ENCODE measurements at regions of chr9 and their contacts with region 1.

Region 1: DNA sequence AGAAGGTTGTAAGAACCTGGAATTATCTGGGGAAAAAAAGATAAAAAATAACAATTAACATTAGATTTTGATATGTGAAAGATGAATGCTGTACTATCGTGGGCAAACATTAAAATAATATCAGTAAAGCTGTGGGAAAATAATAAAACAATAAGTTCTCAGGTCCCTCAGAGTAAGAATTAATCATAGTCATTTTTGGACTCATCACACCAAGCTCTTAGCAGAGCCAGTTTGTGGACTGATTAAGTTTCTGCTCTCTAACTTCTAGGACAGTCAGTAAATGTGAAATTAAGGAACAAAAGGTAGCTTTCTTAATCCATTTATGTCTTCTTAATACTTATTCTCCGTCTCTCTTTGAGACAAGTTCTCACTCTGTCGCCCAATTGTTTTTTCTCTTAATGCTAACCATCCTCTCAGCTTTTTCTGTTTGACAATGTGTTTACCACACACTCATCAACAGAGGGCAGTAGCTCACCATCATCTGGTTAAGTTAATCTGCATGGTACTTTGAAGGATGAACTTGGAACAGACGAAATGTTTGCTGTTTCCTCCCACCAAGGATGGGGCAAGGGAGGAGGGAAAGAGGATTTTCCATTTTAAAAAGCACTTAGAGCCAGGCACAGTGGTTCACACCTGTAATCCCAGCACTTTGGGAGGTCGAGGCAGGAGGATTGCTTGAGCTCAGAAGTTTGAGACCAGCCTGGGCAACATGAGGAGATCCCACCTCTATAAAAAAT is 5.3 kb upstream of the ACO1 start:
- DNase-seq: peak; percentile 90
- H3K4me3 Mint-ChIP-seq: no peak overlapping the region
- H3K27ac Mint-ChIP-seq: no peak overlapping the region
- H3K4me1 Mint-ChIP-seq: peaks cover 18% of the 10 kb centered on the region
- H3K27me3 Mint-ChIP-seq: peaks cover 14% of the 10 kb centered on the region
- CTCF ChIP-seq: peak; percentile 59

Region 2: DNA sequence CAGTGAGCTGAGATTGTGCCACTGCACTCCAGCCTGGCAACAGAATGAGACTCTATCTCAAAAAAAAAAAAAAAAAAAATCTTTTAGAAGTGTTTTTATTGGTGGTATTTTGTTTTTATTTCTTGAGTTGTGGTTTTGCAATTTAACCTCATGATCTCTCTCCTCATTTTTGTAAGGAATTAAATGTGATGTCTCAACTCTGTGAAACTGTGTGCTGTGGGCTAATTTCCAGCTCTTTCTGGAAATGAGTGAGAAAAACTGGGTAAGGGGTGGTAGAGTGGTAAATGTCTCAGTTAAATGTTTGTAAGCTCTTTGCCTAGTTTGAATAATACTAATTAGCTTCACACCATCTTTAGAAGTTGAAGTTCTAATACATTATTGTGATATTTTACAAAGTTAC is 34.3 kb after region 1 on chr9:
- CTCF ChIA-PET with region 1: interaction called, 10 read pairs
- POLR2A ChIA-PET with region 1: interaction called, 3 read pairs
- intact Hi-C with region 1: no loop called
- DNase-seq: peak; percentile 44
- H3K4me3 Mint-ChIP-seq: no peak overlapping the region
- H3K27ac Mint-ChIP-seq: peak overlapping the region; percentile 59
- H3K4me1 Mint-ChIP-seq: no peaks in the 10 kb centered on the region
- H3K27me3 Mint-ChIP-seq: no peaks in the 10 kb centered on the region
- CTCF ChIP-seq: no peak

Region 3: GRCh38 chr9:32508728-32509127 is 129.6 kb after region 1 on chr9:
- CTCF ChIA-PET with region 1: interaction called, 11 read pairs
- POLR2A ChIA-PET with region 1: interaction called, 3 read pairs
- intact Hi-C with region 1: no loop called
- DNase-seq: no peak
- H3K4me3 Mint-ChIP-seq: no peak overlapping the region
- H3K27ac Mint-ChIP-seq: no peak overlapping the region
- H3K4me1 Mint-ChIP-seq: no peaks in the 10 kb centered on the region
- H3K27me3 Mint-ChIP-seq: no peaks in the 10 kb centered on the region
- CTCF ChIP-seq: no peak

Region 4: DNA sequence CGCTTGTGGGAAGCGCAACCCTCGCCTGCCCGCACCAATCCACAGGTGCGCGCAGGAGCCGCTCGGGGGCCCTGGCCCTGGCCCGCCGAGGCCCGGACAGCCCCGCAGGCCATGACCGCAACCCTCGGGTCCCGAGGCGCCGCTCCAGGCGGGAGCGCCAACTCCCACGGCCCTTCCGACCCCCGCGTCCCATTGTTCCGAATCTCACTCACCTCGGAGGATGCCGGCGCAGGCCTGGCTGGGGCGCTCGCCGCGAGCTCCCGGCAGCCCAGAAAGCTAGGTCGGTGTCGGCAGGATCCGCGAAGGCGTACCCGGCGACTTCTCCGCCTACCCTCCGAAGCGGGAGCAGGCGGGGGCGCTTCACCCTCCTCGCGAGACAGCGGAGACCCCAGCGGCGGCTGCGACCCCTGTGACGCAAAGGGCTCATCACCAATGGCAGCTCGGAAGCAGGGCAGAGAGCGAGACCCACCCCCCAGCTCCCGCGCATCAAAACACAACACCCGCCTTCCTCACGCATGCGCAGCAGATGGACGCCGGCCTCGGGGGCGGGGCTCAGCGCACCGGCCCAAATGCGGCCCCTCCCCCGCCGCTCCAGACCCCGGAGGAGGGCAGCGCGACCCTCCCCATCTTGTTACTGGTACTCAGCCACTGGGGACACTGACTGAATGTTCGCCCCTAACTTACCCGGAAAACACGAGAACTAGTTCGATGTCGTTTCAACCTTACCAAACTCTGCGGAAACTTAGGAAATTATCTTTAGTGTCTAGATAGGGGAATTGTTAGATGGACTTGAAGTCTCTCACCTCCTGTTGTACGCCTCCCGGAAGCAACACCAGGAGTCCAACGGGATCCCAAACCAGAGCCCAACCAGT is 171.6 kb after region 1 on chr9:
- CTCF ChIA-PET with region 1: interaction called, 16 read pairs
- POLR2A ChIA-PET with region 1: interaction called, 14 read pairs
- intact Hi-C with region 1: no loop called
- DNase-seq: peak; percentile 86
- H3K4me3 Mint-ChIP-seq: peak overlapping the region; percentile 98
- H3K27ac Mint-ChIP-seq: peak overlapping the region; percentile 94
- H3K4me1 Mint-ChIP-seq: peaks cover 13% of the 10 kb centered on the region
- H3K27me3 Mint-ChIP-seq: no peaks in the 10 kb centered on the region
- CTCF ChIP-seq: no peak

Region 5: DNA sequence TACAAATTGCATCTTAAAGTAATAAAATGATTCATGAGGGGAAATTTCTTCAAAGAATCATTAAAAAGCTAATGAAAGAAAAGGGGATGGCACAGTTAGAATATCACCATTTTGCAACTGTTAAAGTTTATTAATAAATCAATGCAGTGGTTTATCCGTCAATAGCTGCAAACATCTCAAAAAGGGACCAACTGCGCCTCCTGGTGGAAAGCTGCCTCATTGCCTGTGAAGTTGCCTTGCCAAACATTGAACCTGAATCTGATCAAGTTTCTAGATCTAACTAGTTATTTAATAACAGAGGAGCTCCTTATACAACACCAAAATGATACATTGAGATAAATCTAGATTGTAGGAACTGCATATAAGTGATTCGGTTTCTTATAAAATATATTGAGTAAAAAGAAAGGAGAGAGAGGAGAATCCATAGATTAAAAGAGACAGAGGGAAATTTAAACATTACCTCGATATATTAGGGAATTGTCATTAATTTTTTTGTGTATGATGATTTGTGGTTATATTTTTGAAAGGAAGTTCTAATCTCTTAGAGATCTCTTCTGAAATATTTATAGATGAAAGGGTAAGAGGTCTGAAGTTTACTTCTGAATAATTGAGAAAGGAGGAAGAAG is 200.7 kb after region 1 on chr9:
- CTCF ChIA-PET with region 1: interaction called, 601 read pairs
- POLR2A ChIA-PET with region 1: interaction called, 49 read pairs
- intact Hi-C with region 1: loop called (anchors 1 kb)
- DNase-seq: peak; percentile 73
- H3K4me3 Mint-ChIP-seq: peak overlapping the region; percentile 49
- H3K27ac Mint-ChIP-seq: no peak overlapping the region
- H3K4me1 Mint-ChIP-seq: no peaks in the 10 kb centered on the region
- H3K27me3 Mint-ChIP-seq: no peaks in the 10 kb centered on the region
- CTCF ChIP-seq: peak; percentile 79